K562 (cell line): ENCODE measurements at regions of chr14 and their contacts with region 1.

Region 1: GRCh38 chr14:34496679-34497513 is 34.9 kb upstream of the SPTSSA start:
- DNase-seq: peak; percentile 68 to 88 (median 76)
- ATAC-seq: peak; percentile 87
- H3K4me3 ChIP-seq: no peak overlapping the region
- H3K27ac ChIP-seq: peak overlapping the region; percentile 81
- H3K4me1 ChIP-seq: peaks cover 0 to 14% of the 10 kb centered on the region in 2 experiments; a peak in 3 of 5 replicates
- H3K27me3 ChIP-seq: no peaks in the 10 kb centered on the region
- CTCF ChIP-seq: peak; percentile 10 to 46 (median 37); a peak in 3 of 6 replicates
- EP300 ChIP-seq: 0 out of 2 replicates have a peak, but pooled peaks have one; percentile 30
- POLR2A ChIP-seq: peak; percentile 56
- RAD21 ChIP-seq: peak; percentile 9 to 23; a peak in 2 of 4 replicates

Region 2: GRCh38 chr14:34461334-34462131 is 35.4 kb before region 1 on chr14:
- CTCF ChIA-PET with region 1: no interaction called
- POLR2A ChIA-PET with region 1: interaction called, 3 read pairs
- in situ Hi-C with region 1: no loop called
- intact Hi-C with region 1: loop called (anchors 5 kb)
- DNase-seq: peak; percentile 35 to 72 (median 60)
- ATAC-seq: peak; percentile 67
- H3K4me3 ChIP-seq: peak overlapping the region; percentile 84
- H3K27ac ChIP-seq: peak overlapping the region; percentile 81
- H3K4me1 ChIP-seq: peaks cover 12 to 32% of the 10 kb centered on the region in 2 experiments
- H3K27me3 ChIP-seq: no peaks in the 10 kb centered on the region
- CTCF ChIP-seq: no peak
- EP300 ChIP-seq: no peak
- POLR2A ChIP-seq: no peak
- RAD21 ChIP-seq: no peak